ENCODE measurements at regions of chr12 and their contacts with region 1.

Region 1: DNA sequence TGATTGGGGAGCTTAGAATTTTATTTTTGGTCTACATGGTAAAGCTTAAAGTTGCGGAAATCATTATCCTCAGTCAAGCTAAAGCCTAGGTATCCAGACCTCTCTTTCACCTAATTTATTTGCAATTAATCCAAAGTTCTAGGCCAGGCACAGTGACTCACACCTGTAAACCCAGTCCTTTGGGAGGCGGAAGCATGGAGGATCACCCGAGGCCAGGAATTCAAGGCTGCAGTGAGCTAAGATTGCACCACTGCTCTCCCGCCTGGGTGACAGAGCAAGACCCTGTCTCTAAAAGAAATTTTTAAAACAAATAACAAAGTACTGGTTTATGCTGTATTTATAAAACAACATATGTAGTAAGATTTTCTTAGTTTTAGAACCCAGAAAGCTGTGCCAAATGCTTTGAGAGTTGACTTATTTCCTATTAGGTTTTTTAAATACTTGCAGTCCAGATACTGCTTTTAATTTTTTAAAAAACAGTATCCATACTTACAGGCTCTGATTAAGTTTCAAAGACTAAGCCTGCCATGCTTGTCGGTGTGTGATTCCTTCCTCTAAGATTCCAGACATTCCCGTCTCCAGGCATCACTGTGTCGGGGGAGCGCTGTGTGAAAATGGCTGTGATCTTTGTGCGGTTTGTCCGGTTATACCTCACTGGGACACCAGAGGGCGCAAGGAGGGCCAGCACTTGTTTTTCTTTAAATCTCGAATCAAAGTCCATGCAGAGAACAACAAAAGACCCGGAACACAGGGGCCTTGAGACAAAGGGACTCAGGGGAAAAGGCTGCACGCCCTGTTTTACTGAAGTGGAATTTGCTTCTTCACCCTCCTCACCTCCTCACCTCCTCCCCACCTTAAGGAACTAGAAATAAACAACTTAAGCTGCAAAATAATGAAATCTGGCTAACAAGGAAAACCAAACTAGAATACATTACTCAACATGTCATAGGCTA is 24.6 kb upstream of the TMPO start:
- DNase-seq: no peak
- H3K4me3 ChIP-seq: no peak overlapping the region
- CTCF ChIP-seq: peak; percentile 86

Region 2: GRCh38 chr12:98478606-98479005 is 12.2 kb before region 1 on chr12:
- CTCF ChIA-PET with region 1: interaction called, 19 read pairs
- POLR2A ChIA-PET with region 1: interaction called, 3 read pairs
- DNase-seq: no peak
- H3K4me3 ChIP-seq: no peak overlapping the region
- CTCF ChIP-seq: no peak

Region 3: GRCh38 chr12:98509063-98509462 is 18.3 kb after region 1 on chr12:
- CTCF ChIA-PET with region 1: interaction called, 67 read pairs
- POLR2A ChIA-PET with region 1: no interaction called
- DNase-seq: no peak
- H3K4me3 ChIP-seq: no peak overlapping the region
- CTCF ChIP-seq: no peak

Region 4: DNA sequence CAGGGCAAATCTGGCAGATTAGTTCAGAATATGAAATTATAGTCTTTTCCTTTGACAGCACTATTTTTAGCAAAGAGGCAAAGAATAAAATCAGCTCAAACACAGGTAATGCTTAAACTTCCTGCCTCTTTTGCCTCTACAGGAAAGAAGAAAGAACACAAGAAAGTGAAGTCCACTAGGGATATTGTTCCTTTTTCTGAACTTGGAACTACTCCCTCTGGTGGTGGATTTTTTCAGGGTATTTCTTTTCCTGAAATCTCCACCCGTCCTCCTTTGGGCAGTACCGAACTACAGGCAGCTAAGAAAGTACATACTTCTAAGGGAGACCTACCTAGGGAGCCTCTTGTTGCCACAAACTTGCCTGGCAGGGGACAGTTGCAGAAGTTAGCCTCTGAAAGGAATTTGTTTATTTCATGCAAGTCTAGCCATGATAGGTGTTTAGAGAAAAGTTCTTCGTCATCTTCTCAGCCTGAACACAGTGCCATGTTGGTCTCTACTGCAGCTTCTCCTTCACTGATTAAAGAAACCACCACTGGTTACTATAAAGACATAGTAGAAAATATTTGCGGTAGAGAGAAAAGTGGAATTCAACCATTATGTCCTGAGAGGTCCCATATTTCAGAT is 42.0 kb after region 1 on chr12:
- CTCF ChIA-PET with region 1: interaction called, 17 read pairs
- POLR2A ChIA-PET with region 1: no interaction called
- DNase-seq: no peak
- H3K4me3 ChIP-seq: no peak overlapping the region
- CTCF ChIP-seq: peak; percentile 29